ENCODE measurements at regions of chr3 and their contacts with region 1.

Region 1: DNA sequence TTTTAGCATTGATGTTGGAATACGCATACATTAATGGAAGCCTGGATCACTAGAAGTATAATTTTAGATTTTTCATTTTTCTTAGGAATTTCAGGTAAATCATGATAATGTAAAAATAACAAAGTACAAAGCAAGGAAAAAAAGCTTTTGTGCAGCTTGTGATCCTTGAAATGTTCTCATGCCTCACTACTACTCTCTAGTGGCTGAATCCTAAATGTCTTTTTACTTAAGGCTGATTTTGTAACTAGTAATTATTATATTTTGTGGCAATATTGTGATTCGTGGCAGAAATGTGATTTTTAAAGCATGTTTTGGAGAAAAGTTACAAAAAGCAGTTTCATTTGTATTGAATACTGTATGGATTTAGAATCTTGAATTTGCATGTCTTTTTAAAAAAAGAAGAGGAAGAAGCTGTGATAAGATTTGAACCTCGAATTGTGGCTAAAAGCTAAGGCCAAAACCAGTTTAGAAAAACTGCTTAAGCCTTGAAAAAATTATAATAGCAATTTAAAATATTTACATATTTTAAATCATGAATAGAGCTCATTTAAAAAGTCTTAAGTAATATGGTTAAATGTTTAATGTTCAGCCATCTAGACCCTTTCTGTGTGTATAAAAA is 39.0 kb downstream of the U2SURP start:
- DNase-seq: no peak
- H3K4me3 ChIP-seq: no peak overlapping the region; a peak in 1 of 4 replicates
- H3K27ac ChIP-seq: no peak overlapping the region
- H3K4me1 ChIP-seq: no peaks in the 10 kb centered on the region
- H3K27me3 ChIP-seq: no peaks in the 10 kb centered on the region
- CTCF ChIP-seq: peak; percentile 69
- EP300 ChIP-seq: no peak
- RAD21 ChIP-seq: peak; percentile 27; the same call in 1 of the 2 replicates

Region 2: GRCh38 chr3:142963516-142964448 is 76.6 kb before region 1 on chr3 and contains the start of gene PAQR9:
- CTCF ChIA-PET with region 1: no interaction called
- POLR2A ChIA-PET with region 1: no interaction called
- DNase-seq: peak; percentile 79
- H3K4me3 ChIP-seq: peak within 1 kb of the TSS; percentile 63 to 68
- H3K27ac ChIP-seq: no peak within 1 kb of the TSS
- H3K4me1 ChIP-seq: peaks cover 3 to 6% of the 10 kb centered on the region in 2 experiments; a peak in 1 of 4 replicates
- H3K27me3 ChIP-seq: no peaks in the 10 kb centered on the region
- CTCF ChIP-seq: no peak
- EP300 ChIP-seq: no peak
- RAD21 ChIP-seq: no peak
- polyA plus RNA-seq, gene PAQR9: 0.10 and 0.16 TPM in 2 replicates

Region 3: GRCh38 chr3:143054011-143054410 is 13.6 kb after region 1 on chr3:
- CTCF ChIA-PET with region 1: interaction called, 18 read pairs
- POLR2A ChIA-PET with region 1: no interaction called
- DNase-seq: no peak
- H3K4me3 ChIP-seq: no peak overlapping the region
- H3K27ac ChIP-seq: no peak overlapping the region
- H3K4me1 ChIP-seq: no peaks in the 10 kb centered on the region
- H3K27me3 ChIP-seq: no peaks in the 10 kb centered on the region
- CTCF ChIP-seq: no peak
- EP300 ChIP-seq: no peak
- RAD21 ChIP-seq: no peak

Region 4: DNA sequence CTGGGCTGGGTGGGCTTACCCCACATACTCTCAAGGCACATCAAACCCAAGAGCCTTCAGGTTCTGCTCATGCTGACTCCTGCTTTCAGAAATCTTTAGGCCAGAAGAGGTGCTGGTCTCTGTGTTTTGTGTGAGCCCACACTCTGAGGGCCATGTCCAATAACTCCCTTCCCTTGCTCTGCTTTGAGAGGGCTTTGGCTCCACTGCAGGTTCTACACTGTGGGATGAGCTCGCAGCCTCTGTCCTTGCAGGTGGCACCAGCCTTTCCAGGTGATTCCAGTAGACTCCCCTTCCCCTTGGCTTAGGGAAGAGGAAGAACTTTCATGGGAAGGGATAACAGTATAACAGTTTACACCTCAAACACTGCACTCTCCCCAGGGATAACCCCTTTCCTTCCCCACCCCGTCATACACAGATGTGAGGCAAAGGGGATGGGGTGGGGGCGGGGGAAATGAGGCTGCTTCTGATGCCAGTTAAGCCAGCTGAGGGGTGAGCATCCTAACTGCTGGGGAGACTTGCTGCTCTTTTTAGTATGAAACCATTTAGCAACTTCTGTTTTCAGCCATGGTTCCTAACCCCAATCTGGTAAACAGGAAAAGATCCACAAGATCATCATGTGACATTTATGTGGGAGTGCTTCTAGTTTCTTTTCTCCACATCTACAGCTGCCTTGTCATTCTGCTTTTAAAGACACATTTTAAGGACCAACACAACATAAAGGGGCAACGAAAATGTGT is 545.5 kb after region 1 on chr3:
- CTCF ChIA-PET with region 1: no interaction called
- POLR2A ChIA-PET with region 1: no interaction called
- DNase-seq: no peak
- H3K4me3 ChIP-seq: no peak overlapping the region
- H3K27ac ChIP-seq: no peak overlapping the region
- H3K4me1 ChIP-seq: no peaks in the 10 kb centered on the region
- H3K27me3 ChIP-seq: peaks cover 19% of the 10 kb centered on the region
- CTCF ChIP-seq: no peak
- EP300 ChIP-seq: no peak
- RAD21 ChIP-seq: no peak

Measured in SK-N-SH (cell line).